ENCODE measurements at regions of chr18 and their contacts with region 1.

Region 1: DNA sequence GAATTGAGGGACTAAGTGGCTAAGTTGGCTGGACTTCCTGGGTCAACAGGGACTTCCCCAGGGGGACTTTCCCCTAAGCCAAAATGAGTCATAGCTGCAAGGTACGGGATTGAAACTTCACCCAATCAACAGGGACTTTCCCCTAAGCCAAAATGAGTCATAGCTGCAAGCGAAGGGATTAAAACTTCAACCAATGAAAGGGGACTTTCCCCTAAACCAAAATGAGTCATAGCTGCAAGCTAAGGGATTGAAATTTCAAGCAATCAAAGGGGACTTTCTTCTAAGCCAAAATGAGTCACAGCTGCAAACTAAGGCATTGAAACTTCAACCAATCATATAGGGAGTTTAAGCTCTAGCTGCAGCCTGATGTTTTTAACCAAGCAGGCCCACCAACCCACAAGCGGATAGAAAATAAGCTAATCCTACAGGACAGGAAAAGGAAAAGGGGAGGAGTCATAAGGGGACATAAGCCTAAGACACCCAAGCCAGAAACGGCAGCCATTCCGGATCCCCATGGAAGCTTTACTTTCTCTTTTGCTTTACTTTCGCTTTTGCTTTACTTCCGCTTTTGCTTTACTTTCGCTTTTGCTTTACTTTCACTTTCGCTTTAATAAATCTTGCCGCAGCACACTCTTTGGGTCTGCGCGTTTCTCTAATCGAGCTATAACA is 1375.4 kb upstream of the CELF4 start:
- DNase-seq: peak; percentile 57
- ATAC-seq: peak; percentile 39; the same call in 2 of the 3 replicates
- H3K4me3 ChIP-seq: no peak overlapping the region
- H3K27ac ChIP-seq: no peak overlapping the region
- H3K4me1 ChIP-seq: peaks cover 8% of the 10 kb centered on the region
- H3K27me3 ChIP-seq: no peaks in the 10 kb centered on the region
- CTCF ChIP-seq: no peak
- EP300 ChIP-seq: no peak; a peak in 1 of 4 replicates
- POLR2A ChIP-seq: no peak
- RAD21 ChIP-seq: no peak

Region 2: GRCh38 chr18:38586327-38586726 is 354.7 kb before region 1 on chr18:
- CTCF ChIA-PET with region 1: no interaction called
- POLR2A ChIA-PET with region 1: no interaction called
- in situ Hi-C with region 1: no loop called
- intact Hi-C with region 1: no loop called
- DNase-seq: no peak
- ATAC-seq: no peak
- H3K4me3 ChIP-seq: no peak overlapping the region
- H3K27ac ChIP-seq: no peak overlapping the region
- H3K4me1 ChIP-seq: no peaks in the 10 kb centered on the region
- H3K27me3 ChIP-seq: no peaks in the 10 kb centered on the region; a peak in 1 of 5 replicates
- CTCF ChIP-seq: no peak
- EP300 ChIP-seq: no peak
- POLR2A ChIP-seq: no peak
- RAD21 ChIP-seq: no peak

Region 3: DNA sequence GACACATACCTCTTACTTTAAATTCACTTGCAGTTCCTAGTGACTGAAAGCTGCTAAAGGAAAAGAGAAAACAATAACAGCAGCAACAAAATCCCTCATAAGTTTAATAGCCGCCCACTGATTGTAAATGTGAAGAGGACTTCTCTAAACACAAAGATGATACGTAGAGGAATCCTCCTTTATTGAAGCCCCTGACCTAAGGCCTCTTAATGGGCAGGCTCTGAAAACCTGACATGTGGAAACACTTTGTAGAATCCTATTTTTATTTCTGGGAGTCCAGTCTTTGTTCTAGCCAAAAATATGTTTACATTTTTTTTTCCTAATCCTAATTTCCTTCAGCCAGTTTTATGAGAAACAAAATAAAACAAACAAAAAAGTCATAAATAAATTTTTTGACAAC is 97.7 kb before region 1 on chr18:
- CTCF ChIA-PET with region 1: no interaction called
- POLR2A ChIA-PET with region 1: no interaction called
- in situ Hi-C with region 1: loop called (anchors 25 kb)
- intact Hi-C with region 1: no loop called
- DNase-seq: no peak
- ATAC-seq: no peak
- H3K4me3 ChIP-seq: no peak overlapping the region
- H3K27ac ChIP-seq: no peak overlapping the region
- H3K4me1 ChIP-seq: no peaks in the 10 kb centered on the region
- H3K27me3 ChIP-seq: no peaks in the 10 kb centered on the region
- CTCF ChIP-seq: no peak
- EP300 ChIP-seq: no peak
- POLR2A ChIP-seq: no peak
- RAD21 ChIP-seq: no peak

Region 4: GRCh38 chr18:38961880-38962279 is 20.9 kb after region 1 on chr18:
- CTCF ChIA-PET with region 1: no interaction called
- POLR2A ChIA-PET with region 1: no interaction called
- in situ Hi-C with region 1: no loop called
- intact Hi-C with region 1: no loop called
- DNase-seq: no peak
- ATAC-seq: no peak
- H3K4me3 ChIP-seq: no peak overlapping the region
- H3K27ac ChIP-seq: no peak overlapping the region
- H3K4me1 ChIP-seq: no peaks in the 10 kb centered on the region
- H3K27me3 ChIP-seq: 0 out of 5 replicates have a peak, but pooled peaks cover 0 to 2% of the 10 kb centered on the region in 2 experiments
- CTCF ChIP-seq: no peak
- EP300 ChIP-seq: no peak
- POLR2A ChIP-seq: no peak
- RAD21 ChIP-seq: no peak